ENCODE measurements at regions of chr17 and their contacts with region 1.

Region 1: DNA sequence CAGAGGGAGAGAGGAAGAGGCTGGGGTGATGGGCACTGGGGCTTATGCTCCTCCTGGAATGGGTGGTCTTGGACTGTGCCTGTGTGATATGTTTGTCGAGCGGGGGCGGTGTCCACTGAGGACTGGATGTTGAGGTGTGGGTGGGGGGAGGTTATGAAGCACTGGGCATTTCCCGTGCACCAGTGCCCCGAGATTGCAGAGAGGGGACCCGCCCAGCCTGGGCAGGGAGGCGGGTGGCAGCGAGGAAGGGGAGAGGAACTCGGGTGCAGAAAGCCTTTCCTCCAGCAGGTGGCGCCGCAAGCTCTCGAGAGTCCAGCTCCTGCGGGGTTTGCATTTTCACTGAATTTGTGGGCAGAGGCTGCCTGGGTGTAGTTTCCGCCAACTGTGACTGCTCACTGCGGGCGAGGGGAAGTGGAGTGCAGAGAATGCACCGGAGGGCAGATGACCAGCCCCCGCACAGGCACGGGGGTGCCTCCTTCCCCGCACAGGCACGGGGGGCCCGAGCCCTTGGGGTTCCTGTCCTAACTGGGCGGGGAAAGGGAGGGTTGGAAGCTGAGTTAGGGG is 190.6 kb downstream of the SEC14L1 start:
- DNase-seq: peak; percentile 92
- H3K4me3 Mint-ChIP-seq: peak overlapping the region; percentile 70
- H3K27ac Mint-ChIP-seq: peak overlapping the region; percentile 86
- H3K4me1 Mint-ChIP-seq: peaks cover 38% of the 10 kb centered on the region
- H3K27me3 Mint-ChIP-seq: no peaks in the 10 kb centered on the region

Region 2: GRCh38 chr17:77372444-77373298 is 41.3 kb after region 1 on chr17:
- intact Hi-C with region 1: loop called (anchors 1 kb)
- DNase-seq: peak; percentile 77
- H3K4me3 Mint-ChIP-seq: peak overlapping the region; percentile 75
- H3K27ac Mint-ChIP-seq: peak overlapping the region; percentile 75
- H3K4me1 Mint-ChIP-seq: peaks cover 44% of the 10 kb centered on the region
- H3K27me3 Mint-ChIP-seq: no peaks in the 10 kb centered on the region

Region 3: GRCh38 chr17:77404812-77405581 is 73.6 kb after region 1 on chr17:
- intact Hi-C with region 1: loop called (anchors 2 kb)
- DNase-seq: peak; percentile 77
- H3K4me3 Mint-ChIP-seq: peak overlapping the region; percentile 93
- H3K27ac Mint-ChIP-seq: peak overlapping the region; percentile 84
- H3K4me1 Mint-ChIP-seq: peaks cover 72% of the 10 kb centered on the region
- H3K27me3 Mint-ChIP-seq: no peaks in the 10 kb centered on the region

Region 4: DNA sequence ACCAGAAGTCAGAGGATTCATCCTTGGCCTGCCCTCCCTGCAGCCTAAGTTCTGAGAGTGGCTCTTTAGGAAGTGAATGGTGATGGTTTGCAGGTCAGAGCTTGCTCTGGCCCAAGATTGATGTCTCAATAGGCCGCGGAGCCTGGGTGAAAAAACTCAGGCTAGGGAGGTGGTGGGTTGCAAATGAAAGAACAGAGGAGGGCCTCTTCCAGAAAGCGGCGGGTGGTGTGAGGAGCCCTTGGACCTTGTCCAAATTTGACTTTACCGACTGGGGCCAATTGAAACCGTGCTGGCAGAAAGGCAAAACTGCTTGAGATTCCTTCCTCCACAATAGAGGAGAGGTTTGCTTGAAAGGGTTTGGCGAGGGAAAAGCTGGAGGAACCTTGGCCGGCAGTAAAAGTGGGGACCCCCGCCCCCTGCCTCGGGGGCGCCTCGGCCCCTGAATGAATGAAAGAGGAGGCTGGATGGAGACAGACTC is 140.6 kb after region 1 on chr17:
- intact Hi-C with region 1: loop called (anchors 2 kb)
- DNase-seq: no peak
- H3K4me3 Mint-ChIP-seq: peak overlapping the region; percentile 74
- H3K27ac Mint-ChIP-seq: peak overlapping the region; percentile 90
- H3K4me1 Mint-ChIP-seq: peaks cover 78% of the 10 kb centered on the region
- H3K27me3 Mint-ChIP-seq: no peaks in the 10 kb centered on the region

Region 5: DNA sequence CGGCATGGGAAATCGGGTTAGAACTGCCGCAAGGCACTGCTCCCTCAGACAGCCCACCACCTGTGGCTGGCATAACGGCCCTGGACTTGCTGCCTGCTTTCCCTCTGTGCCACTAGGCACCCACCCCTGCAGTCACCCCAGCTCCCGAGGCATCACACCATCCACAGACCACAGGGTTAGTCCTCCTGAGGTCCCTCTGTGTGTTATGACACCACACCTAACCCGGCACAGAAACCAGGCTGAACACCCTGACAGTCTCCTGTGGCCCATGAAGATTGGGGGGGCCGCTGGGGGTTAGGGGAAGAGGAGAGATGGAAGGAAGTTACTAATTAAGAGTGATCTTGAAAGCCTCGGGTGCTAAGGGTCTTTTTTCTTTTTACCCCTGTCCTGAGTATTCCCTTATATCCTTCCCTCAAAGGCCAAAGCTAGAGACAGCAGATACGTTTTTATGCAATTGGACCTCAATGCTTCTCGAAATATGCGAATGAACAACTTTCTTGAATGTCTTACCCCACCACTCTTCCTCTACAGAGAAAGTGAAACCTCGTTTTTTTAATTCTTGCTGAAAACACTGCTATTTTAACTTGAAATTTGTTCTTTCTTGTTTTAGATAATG is 1443.7 kb after region 1 on chr17:
- intact Hi-C with region 1: loop called (anchors 5 kb)
- DNase-seq: peak; percentile 67
- H3K4me3 Mint-ChIP-seq: peak overlapping the region; percentile 85
- H3K27ac Mint-ChIP-seq: peak overlapping the region; percentile 98
- H3K4me1 Mint-ChIP-seq: peaks cover 58% of the 10 kb centered on the region
- H3K27me3 Mint-ChIP-seq: no peaks in the 10 kb centered on the region

Measured in activated T-helper 2 cell treated with anti-CD3 and anti-CD28 coated beads, Interferon-gamma antibody, Interleukin-2, Interleukin-4, amounts not matched to agents 10 μg/mL and 5 μg/mL and 100 μg/mL, durations not matched to agents 14 hours and 24 hours and 36 hours (primary cell).